Activated T-helper 1 cell treated with anti-CD3 and anti-CD28 coated beads, Interleukin-12 subunit alpha, Interleukin-12 subunit beta, Interleukin-2, Interleukin-4 antibody, amounts not matched to agents 30 ng/mL and 10 ng/mL and 1 ng/mL, durations not matched to agents 14 hours and 24 hours and 36 hours (primary cell): ENCODE measurements at regions of chr14 and their contacts with region 1.

Region 1: GRCh38 chr14:101947906-101948665 is 16.3 kb upstream of the DYNC1H1 start:
- DNase-seq: peak; percentile 100
- H3K4me3 Mint-ChIP-seq: peak overlapping the region; percentile 97
- H3K27ac Mint-ChIP-seq: peak overlapping the region; percentile 97
- H3K4me1 Mint-ChIP-seq: peaks cover 12% of the 10 kb centered on the region
- H3K27me3 Mint-ChIP-seq: peaks cover 15% of the 10 kb centered on the region

Region 2: GRCh38 chr14:101731187-101732080 is 216.7 kb before region 1 on chr14:
- intact Hi-C with region 1: loop called (anchors 1 kb)
- DNase-seq: peak; percentile 79
- H3K4me3 Mint-ChIP-seq: peak overlapping the region; percentile 51
- H3K27ac Mint-ChIP-seq: peak overlapping the region; percentile 82
- H3K4me1 Mint-ChIP-seq: peaks cover 59% of the 10 kb centered on the region
- H3K27me3 Mint-ChIP-seq: no peaks in the 10 kb centered on the region

Region 3: DNA sequence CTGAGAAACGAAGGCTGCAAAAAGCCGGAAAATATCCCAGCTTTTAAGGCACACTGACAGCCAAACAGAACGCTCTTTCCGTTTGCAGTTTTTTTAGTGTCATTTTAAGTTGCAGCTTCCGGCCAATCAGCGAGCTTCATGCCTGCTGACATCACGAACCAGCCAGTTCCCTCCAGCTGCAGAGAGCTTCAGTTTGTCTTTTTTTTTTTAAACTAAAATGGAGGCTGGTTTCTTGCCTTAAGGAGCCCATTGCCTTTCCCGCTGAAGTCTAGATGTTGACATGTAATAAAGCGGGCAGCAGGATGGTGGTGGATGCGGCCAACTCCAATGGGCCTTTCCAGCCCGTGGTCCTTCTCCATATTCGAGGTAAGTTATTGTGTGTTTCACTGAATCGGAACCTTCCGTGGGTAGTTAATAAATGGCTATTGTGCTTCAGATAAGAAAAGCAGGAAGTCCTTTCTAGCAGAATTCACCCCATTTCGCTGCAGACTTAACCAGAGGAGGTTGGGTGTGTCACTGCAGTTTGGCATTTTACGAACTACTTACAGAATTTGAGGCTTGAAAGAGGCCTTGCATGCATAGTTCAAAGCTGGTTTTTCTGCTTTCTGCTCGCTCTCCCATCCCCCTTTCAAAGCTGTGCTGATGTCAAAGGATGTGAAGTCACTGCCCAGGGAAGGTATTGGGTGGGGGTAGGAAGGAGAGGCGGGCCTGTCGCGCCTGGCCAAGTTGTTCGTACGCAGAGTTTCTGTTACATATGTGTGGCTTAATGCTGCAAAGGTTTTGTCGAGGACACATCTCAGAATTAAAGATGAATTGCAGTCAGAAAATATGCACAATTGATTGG is 138.2 kb before region 1 on chr14:
- intact Hi-C with region 1: loop called (anchors 1 kb)
- DNase-seq: peak; percentile 88
- H3K4me3 Mint-ChIP-seq: peak overlapping the region; percentile 96
- H3K27ac Mint-ChIP-seq: peak overlapping the region; percentile 100
- H3K4me1 Mint-ChIP-seq: peaks cover 52% of the 10 kb centered on the region
- H3K27me3 Mint-ChIP-seq: no peaks in the 10 kb centered on the region

Region 4: DNA sequence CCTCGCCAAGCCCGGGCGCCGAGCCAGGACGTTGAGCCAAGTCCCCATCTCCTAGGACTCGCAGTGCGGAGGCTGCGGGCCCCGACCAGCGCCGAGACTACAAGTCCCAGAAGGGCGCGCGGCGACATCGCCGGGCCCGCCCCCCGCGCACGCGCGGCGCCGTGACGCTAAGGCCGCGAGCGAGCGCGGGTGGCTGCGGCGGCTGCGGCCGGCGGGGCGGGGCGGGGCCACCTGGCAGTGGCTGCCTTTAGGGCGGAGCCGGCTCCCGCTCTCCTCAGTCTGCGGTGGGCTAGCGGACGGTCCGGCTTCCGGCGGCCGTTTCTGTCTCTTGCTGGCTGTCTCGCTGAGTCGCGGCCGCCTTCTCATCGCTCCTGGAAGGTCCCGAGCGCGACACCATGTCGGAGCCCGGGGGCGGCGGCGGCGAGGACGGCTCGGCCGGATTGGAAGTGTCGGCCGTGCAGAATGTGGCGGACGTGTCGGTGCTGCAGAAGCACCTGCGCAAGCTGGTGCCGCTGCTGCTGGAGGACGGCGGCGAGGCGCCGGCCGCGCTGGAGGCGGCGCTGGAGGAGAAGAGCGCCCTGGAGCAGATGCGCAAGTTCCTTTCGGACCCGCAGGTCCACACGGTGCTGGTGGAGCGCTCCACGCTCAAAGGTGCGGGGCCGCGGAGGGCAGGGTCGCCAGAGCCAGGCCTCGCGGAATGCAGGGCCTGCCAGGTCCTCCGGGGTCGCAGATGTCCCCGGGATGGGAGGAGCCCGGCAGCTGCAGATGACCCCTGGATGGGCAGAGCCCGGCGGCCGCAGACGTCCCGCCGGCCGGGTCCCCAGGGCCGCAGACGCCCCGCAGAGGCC is 16.4 kb after region 1 on chr14 and contains the start of gene DYNC1H1:
- intact Hi-C with region 1: loop called (anchors 1 kb)
- DNase-seq: peak; percentile 89
- H3K4me3 Mint-ChIP-seq: peak within 1 kb of the TSS; percentile 90
- H3K27ac Mint-ChIP-seq: peak within 1 kb of the TSS; percentile 93
- H3K4me1 Mint-ChIP-seq: peaks cover 38% of the 10 kb centered on the region
- H3K27me3 Mint-ChIP-seq: peaks cover 2% of the 10 kb centered on the region
- total RNA-seq, gene DYNC1H1: 241 and 254 TPM in 2 replicates

Region 5: DNA sequence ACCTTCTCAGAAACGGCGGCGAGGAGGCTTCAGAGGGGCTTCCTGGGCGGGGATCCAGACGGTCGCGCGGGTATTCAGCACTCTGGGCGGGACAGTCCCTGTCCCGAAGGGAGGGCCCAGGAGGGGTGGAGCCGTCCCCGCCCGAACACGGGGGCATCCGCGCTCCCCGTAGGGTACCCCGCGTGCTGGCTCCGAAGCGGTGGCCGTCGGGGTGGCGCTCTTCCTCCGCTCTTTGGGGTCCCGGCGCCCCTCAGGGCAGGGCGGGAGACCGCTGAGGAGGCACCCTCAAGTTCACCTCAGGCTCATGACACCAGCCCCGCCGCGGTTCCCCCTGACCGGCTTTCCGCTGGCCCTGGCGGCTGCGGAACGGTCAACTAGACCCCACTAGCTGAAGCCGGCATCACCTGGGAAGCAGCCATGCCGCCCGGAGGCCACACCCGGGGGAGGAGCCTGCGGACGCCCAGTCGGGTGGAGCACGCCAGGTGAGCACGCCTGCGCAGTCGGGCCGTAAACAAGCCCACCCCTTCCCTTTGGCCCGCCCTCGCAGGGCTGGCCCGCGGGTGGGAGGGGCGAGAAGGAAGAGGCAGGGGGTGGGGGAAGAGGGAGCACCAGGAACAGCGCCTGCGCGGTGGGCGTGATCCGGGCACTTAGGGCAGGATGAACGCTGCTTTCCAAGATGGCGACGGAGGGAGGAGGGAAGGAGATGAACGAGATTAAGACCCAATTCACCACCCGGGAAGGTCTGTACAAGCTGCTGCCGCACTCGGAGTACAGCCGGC is 191.4 kb after region 1 on chr14 and contains the start of gene WDR20:
- intact Hi-C with region 1: loop called (anchors 1 kb)
- DNase-seq: peak; percentile 99
- H3K4me3 Mint-ChIP-seq: peak within 1 kb of the TSS; percentile 94
- H3K27ac Mint-ChIP-seq: peak within 1 kb of the TSS; percentile 91
- H3K4me1 Mint-ChIP-seq: peaks cover 19% of the 10 kb centered on the region
- H3K27me3 Mint-ChIP-seq: no peaks in the 10 kb centered on the region
- total RNA-seq, gene WDR20: 33.9 and 34.2 TPM in 2 replicates

Region 6: DNA sequence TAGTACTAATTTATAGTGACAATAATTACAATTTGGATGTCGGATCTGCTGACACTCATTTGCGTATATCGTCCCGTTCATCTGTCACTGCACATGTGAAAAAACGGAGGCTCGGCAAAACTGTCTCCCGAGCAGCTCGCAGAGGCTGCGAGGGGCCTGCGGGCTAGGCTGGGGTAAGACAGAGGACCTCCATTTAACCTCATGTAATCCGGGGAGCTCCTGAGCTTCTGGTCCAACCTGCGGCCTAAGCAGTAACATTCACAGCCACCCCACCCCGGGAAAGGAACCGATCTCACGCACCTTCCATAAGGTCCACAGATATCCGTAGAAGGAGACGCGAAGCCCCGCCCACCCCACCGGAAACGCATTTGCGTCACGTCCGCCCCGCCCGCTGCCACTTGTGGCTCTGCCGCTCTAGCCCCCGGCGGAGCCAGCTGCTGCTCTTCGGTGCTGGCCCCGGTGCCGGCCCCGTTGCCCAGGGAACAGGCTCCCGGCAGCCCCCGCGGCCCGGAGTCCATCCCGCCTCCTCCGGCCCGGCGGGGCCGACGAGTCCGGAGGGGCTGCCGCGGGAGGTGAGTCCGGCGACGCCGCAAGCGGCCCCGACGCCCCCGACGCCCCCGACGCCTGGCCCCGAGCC is 414.6 kb after region 1 on chr14 and contains the starts of genes CINP and TECPR2:
- intact Hi-C with region 1: loop called (anchors 1 kb)
- DNase-seq: peak; percentile 92
- H3K4me3 Mint-ChIP-seq: peak within 1 kb of the TSS; percentile 93
- H3K27ac Mint-ChIP-seq: peak within 1 kb of the TSS; percentile 91
- H3K4me1 Mint-ChIP-seq: peaks cover 32% of the 10 kb centered on the region
- H3K27me3 Mint-ChIP-seq: no peaks in the 10 kb centered on the region
- total RNA-seq, gene CINP: 39.6 and 42.5 TPM in 2 replicates
- total RNA-seq, gene TECPR2: 9.5 and 10.1 TPM in 2 replicates